Ovary (tissue), 10 donors: ENCODE measurements at regions of chr4 and their contacts with region 1.

Region 1: GRCh38 chr4:147723326-147723725 is 8.6 kb upstream of the ARHGAP10 start:
- DNase-seq: peak in 4 of 5 donors; percentile 40 to 74 (median 50)
- H3K4me3 ChIP-seq: no peak overlapping the region
- H3K27ac ChIP-seq: no peak overlapping the region
- H3K4me1 ChIP-seq: no peaks in the 10 kb centered on the region
- H3K27me3 ChIP-seq: no peaks in the 10 kb centered on the region
- CTCF ChIP-seq: no peak
- EP300 ChIP-seq: no peak
- POLR2A ChIP-seq: no peak

Region 2: DNA sequence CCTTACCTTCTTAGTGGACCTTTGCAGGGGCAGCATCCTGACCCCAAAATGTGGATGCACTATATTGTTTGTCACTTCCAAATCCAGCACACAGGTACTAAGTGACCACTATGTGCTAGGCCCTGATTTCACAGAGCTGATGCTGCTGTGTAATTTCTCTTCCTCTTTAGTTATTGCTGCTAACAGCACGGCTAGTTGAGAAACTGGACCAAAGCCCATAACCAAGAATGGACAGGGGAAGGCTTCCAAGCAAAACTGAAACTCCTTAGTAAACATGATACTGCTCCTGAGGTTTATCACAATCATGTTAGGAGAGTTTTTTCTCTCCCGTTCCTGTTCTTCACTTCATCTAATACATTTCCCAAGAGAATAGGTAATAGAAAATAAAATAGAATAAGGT is 604.8 kb before region 1 on chr4:
- intact Hi-C with region 1: loop called in 1 of 4 experiments (anchors 5 kb)
- DNase-seq: peak in 4 of 5 donors; percentile 29 to 62 (median 46)
- H3K4me3 ChIP-seq: no peak overlapping the region
- H3K27ac ChIP-seq: peak overlapping the region in 1 of 2 donors; percentile 34
- H3K4me1 ChIP-seq: peaks cover 5% of the 10 kb centered on the region
- H3K27me3 ChIP-seq: no peaks in the 10 kb centered on the region
- CTCF ChIP-seq: no peak
- EP300 ChIP-seq: no peak
- POLR2A ChIP-seq: no peak

Region 3: GRCh38 chr4:147741190-147741785 is 18.0 kb after region 1 on chr4:
- intact Hi-C with region 1: no loop called
- DNase-seq: no peak
- H3K4me3 ChIP-seq: no peak overlapping the region
- H3K27ac ChIP-seq: no peak overlapping the region
- H3K4me1 ChIP-seq: peaks cover 29% of the 10 kb centered on the region
- H3K27me3 ChIP-seq: no peaks in the 10 kb centered on the region
- CTCF ChIP-seq: no peak
- EP300 ChIP-seq: no peak
- POLR2A ChIP-seq: no peak

Region 4: DNA sequence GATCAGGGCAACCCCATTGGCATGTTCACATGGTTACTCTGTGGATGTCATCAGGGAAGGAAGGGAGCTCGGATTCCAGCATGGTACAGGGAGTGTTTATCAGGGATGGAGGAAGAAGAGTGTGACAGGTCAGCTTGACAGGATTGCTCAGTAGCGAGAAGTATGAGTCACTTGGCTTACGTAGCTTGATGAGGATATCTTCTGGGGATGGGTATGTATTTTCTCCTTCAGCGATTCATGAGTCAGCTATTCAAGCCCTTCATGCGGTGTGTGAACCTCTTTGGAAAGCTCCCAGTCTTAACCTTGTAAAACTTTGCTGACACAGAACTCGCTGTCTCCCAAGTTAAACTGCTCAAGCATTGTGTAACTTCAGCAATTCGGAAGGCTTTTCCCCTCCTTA is 284.0 kb after region 1 on chr4:
- intact Hi-C with region 1: no loop called
- DNase-seq: peak in 1 of 5 donors; percentile 34
- H3K4me3 ChIP-seq: no peak overlapping the region
- H3K27ac ChIP-seq: no peak overlapping the region
- H3K4me1 ChIP-seq: peaks cover 5% of the 10 kb centered on the region
- H3K27me3 ChIP-seq: no peaks in the 10 kb centered on the region
- CTCF ChIP-seq: no peak
- EP300 ChIP-seq: no peak
- POLR2A ChIP-seq: no peak